CD8-positive, alpha-beta T cell (primary cell): ENCODE measurements at regions of chr6 and their contacts with region 1.

Region 1: DNA sequence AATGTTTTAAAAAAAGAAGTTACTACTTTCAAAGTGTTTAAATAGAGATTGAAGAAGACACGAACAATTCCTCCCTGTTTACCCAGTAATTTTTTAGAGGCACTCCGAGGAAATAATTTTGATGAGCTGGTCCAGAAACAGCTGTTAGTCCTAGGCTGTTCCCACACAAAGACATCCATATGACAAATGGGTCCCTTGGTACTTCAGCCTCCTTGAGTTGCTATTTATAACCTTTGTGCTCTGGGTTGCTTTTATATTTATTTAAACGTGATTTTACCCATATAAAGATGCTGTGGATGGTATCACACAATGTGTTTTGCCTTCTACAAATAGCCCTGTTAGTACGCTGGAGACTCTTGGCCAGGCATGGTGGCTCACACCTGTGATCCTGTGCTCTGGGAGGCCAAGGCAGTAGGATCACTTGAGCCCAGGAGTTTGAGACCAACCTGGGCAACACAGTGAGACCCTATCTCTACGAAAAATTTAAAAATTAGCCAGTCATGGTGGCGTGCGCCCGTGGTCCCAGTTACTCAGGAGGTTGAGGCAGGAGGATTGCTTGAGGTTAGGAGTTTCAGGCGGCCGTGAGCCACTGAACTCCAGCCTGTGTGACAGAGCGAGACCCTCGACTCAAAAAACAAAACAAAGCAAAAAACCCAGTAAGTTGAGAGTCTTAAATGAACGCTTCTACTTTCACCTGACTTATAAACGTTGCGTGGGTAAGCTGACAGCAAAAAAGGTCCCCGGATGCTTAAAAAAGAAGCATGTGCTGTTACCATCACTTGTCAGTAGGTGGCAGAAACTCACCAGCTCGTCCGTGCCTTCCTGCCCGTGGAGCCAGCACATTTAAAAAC is 56.9 kb upstream of the ARMH2 start:
- DNase-seq: peak; percentile 39 to 90 (median 67)
- ATAC-seq: peak; percentile 69
- H3K4me3 ChIP-seq: no peak overlapping the region
- H3K4me3 Mint-ChIP-seq: peak overlapping the region; percentile 36
- H3K27ac ChIP-seq: peak overlapping the region in 1 of 2 experiments; percentile 52
- H3K27ac Mint-ChIP-seq: peak overlapping the region; percentile 96
- H3K4me1 ChIP-seq: peaks cover 53% of the 10 kb centered on the region
- H3K4me1 Mint-ChIP-seq: peaks cover 61% of the 10 kb centered on the region
- H3K27me3 ChIP-seq: no peaks in the 10 kb centered on the region
- H3K27me3 Mint-ChIP-seq: no peaks in the 10 kb centered on the region
- CTCF ChIP-seq: peak; percentile 77

Region 2: DNA sequence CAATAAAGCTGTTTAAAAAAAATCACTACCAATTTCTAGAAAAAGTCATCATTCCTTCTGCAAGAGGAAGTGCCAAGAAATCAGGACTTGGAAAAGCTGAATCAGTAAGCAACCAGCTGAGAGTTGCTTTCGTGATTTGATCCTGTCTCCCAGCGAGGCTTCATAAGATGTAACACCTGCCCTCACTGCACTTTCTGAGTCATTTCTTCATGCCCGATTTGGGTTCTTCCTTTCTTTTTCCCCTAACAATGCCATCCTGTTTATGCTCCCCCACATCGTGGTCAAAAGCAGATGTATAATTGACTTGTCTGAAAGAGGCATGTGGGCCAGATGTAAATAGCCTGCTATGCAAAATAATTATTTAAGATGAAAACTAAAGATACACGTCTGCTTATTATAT is 28.0 kb after region 1 on chr6:
- CTCF ChIA-PET with region 1: interaction called, 5 read pairs
- POLR2A ChIA-PET with region 1: interaction called, 9 read pairs
- intact Hi-C with region 1: loop called in 1 of 2 experiments (anchors 2 kb)
- DNase-seq: peak in 2 of 9 experiments; percentile 33 to 48
- ATAC-seq: peak; percentile 60
- H3K4me3 ChIP-seq: no peak overlapping the region
- H3K4me3 Mint-ChIP-seq: peak overlapping the region; percentile 67
- H3K27ac ChIP-seq: peak overlapping the region in 1 of 2 experiments; percentile 52
- H3K27ac Mint-ChIP-seq: peak overlapping the region; percentile 94
- H3K4me1 ChIP-seq: peaks cover 84% of the 10 kb centered on the region
- H3K4me1 Mint-ChIP-seq: peaks cover 87% of the 10 kb centered on the region
- H3K27me3 ChIP-seq: no peaks in the 10 kb centered on the region
- H3K27me3 Mint-ChIP-seq: no peaks in the 10 kb centered on the region
- CTCF ChIP-seq: no peak

Region 3: DNA sequence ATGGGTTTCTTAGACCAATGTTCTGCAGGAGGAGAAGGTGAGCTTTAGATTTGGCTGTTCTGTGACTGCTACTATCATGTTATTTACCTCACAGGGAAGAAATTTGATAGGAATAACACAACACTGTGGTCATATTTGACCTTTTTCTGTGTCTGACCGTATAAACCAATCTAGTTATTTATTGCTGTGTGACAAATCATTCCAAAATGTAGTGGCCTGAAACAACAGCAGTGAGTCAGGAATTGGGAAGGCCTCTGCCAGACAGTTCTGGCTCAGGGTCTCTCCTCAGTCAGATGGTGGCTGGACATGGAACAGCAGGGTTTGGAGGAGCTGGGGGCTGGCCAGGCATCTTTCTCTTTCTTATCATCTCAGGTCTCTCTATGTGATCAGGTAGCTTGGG is 47.2 kb after region 1 on chr6:
- CTCF ChIA-PET with region 1: interaction called, 41 read pairs
- POLR2A ChIA-PET with region 1: interaction called, 4 read pairs
- intact Hi-C with region 1: loop called (anchors 2 kb)
- DNase-seq: no peak
- ATAC-seq: no peak
- H3K4me3 ChIP-seq: no peak overlapping the region
- H3K4me3 Mint-ChIP-seq: peak overlapping the region; percentile 44
- H3K27ac ChIP-seq: peak overlapping the region; percentile 12 to 63
- H3K27ac Mint-ChIP-seq: peak overlapping the region; percentile 94
- H3K4me1 ChIP-seq: peaks cover 97% of the 10 kb centered on the region
- H3K4me1 Mint-ChIP-seq: peaks cover 94% of the 10 kb centered on the region
- H3K27me3 ChIP-seq: no peaks in the 10 kb centered on the region
- H3K27me3 Mint-ChIP-seq: no peaks in the 10 kb centered on the region
- CTCF ChIP-seq: no peak

Region 4: GRCh38 chr6:24910961-24911712 is 55.5 kb after region 1 on chr6:
- CTCF ChIA-PET with region 1: interaction called, 41 read pairs
- POLR2A ChIA-PET with region 1: interaction called, 7 read pairs
- intact Hi-C with region 1: loop called (anchors 2 kb)
- DNase-seq: peak in 7 of 9 experiments; percentile 29 to 77 (median 68)
- ATAC-seq: peak; percentile 38
- H3K4me3 ChIP-seq: peak overlapping the region; percentile 57 to 62
- H3K4me3 Mint-ChIP-seq: peak overlapping the region; percentile 94
- H3K27ac ChIP-seq: peak overlapping the region; percentile 62 to 69
- H3K27ac Mint-ChIP-seq: peak overlapping the region; percentile 98
- H3K4me1 ChIP-seq: peaks cover 92% of the 10 kb centered on the region
- H3K4me1 Mint-ChIP-seq: peaks cover 93% of the 10 kb centered on the region
- H3K27me3 ChIP-seq: no peaks in the 10 kb centered on the region
- H3K27me3 Mint-ChIP-seq: no peaks in the 10 kb centered on the region
- CTCF ChIP-seq: no peak

Region 5: DNA sequence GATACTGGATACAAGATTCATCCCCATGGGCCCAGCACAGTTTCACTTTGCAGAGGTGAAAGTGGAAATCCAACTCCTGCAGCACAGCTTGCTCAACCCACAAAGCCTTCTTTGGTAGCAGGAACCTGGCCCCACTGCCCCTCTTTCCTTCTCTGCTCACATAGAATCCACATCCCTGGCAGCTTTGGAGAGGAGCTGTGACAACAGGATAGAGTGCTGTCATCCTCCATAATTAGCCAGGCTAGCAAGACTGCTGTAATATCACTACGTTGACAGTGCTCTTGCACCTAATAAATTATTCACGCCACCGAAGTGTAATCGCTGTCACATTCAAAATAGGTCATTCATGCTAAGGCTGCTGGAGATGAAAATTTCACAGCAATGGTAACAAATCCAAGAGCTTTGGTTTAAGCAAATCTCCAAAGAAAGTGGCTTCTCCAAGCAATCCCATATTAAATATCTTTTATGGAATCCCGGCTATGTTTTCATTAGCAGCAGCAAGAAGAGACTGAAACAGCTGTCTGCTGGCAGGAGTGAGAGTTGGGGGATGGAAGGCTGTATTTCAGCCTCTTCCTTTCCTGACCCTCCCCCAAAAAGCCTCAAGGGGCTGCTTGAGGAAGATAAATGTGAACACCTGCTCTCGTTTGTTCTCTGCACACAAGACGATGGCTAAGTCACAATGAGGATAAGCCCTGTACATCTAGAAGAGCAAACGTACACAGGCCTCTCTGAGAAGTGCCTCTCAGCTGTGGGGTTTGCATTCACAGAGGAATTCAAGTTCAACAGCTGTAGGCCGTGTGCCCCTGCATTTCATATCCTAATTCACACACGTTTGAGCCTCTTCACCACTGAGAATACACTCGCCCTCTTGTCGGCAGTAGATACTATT is 63.6 kb after region 1 on chr6:
- CTCF ChIA-PET with region 1: interaction called, 23 read pairs
- POLR2A ChIA-PET with region 1: interaction called, 5 read pairs
- intact Hi-C with region 1: no loop called
- DNase-seq: peak in 1 of 9 experiments; percentile 53
- ATAC-seq: peak; percentile 36
- H3K4me3 ChIP-seq: peak overlapping the region; percentile 2 to 29
- H3K4me3 Mint-ChIP-seq: peak overlapping the region; percentile 69
- H3K27ac ChIP-seq: peak overlapping the region; percentile 2 to 51
- H3K27ac Mint-ChIP-seq: peak overlapping the region; percentile 92
- H3K4me1 ChIP-seq: peaks cover 94% of the 10 kb centered on the region
- H3K4me1 Mint-ChIP-seq: peaks cover 92% of the 10 kb centered on the region
- H3K27me3 ChIP-seq: no peaks in the 10 kb centered on the region
- H3K27me3 Mint-ChIP-seq: no peaks in the 10 kb centered on the region
- CTCF ChIP-seq: no peak

Region 6: GRCh38 chr6:24927985-24928745 is 72.5 kb after region 1 on chr6:
- CTCF ChIA-PET with region 1: interaction called, 43 read pairs
- POLR2A ChIA-PET with region 1: interaction called, 19 read pairs
- intact Hi-C with region 1: loop called in 1 of 2 experiments (anchors 1 kb)
- DNase-seq: peak in 1 of 9 experiments; percentile 51
- ATAC-seq: no peak
- H3K4me3 ChIP-seq: peak overlapping the region; percentile 38 to 89
- H3K4me3 Mint-ChIP-seq: peak overlapping the region; percentile 97
- H3K27ac ChIP-seq: peak overlapping the region; percentile 50 to 73
- H3K27ac Mint-ChIP-seq: peak overlapping the region; percentile 95
- H3K4me1 ChIP-seq: peaks cover 73% of the 10 kb centered on the region
- H3K4me1 Mint-ChIP-seq: peaks cover 82% of the 10 kb centered on the region
- H3K27me3 ChIP-seq: no peaks in the 10 kb centered on the region
- H3K27me3 Mint-ChIP-seq: no peaks in the 10 kb centered on the region
- CTCF ChIP-seq: no peak

Region 7: DNA sequence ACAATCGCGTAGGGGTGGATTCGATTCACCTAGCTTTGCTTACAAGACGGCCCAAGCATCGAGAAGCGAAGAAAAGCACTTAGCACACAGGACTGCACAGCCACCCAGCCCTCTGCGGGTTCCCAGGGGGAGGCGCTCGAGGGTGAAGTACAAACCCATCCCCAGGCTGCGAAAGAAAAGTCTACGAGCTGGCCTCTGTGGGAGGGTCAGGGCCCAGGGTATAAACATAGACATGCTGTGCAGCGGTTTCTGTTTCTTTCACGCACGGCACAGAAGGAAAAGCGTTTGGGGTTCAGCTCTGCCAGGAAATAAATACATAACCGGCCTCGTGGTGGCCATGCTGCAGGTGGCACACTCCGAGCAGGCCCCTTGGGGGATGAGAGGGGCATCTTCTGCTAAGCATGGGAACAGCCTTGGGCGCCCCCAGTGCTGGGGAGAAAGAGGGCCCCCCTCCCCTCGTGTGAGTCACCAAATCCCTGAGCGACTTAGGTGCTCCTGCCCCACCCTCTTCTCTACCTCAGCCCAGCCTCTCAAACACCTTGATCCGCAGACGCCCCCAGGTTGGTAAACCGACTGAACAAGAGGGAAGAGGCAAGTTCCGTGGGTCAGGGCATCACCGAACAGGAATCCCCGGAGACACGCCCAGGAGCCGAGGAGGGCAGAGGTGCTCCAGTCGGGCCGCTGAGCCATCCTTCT is 171.7 kb after region 1 on chr6:
- CTCF ChIA-PET with region 1: interaction called, 34 read pairs
- POLR2A ChIA-PET with region 1: interaction called, 13 read pairs
- intact Hi-C with region 1: no loop called
- DNase-seq: peak; percentile 43 to 89 (median 72)
- ATAC-seq: peak; percentile 94
- H3K4me3 ChIP-seq: peak overlapping the region; percentile 37 to 43
- H3K4me3 Mint-ChIP-seq: peak overlapping the region; percentile 75
- H3K27ac ChIP-seq: peak overlapping the region in 1 of 2 experiments; percentile 63
- H3K27ac Mint-ChIP-seq: peak overlapping the region; percentile 90
- H3K4me1 ChIP-seq: peaks cover 31% of the 10 kb centered on the region
- H3K4me1 Mint-ChIP-seq: peaks cover 43% of the 10 kb centered on the region
- H3K27me3 ChIP-seq: no peaks in the 10 kb centered on the region
- H3K27me3 Mint-ChIP-seq: no peaks in the 10 kb centered on the region
- CTCF ChIP-seq: peak; percentile 60